ENCODE measurements at regions of chr1 and their contacts with region 1.

Region 1: GRCh38 chr1:239603530-239603929 is 217.2 kb downstream of the CHRM3 start:
- DNase-seq: peak; percentile 68
- ATAC-seq: peak; percentile 53
- H3K4me3 ChIP-seq: no peak overlapping the region
- H3K27ac ChIP-seq: peak overlapping the region; percentile 45
- H3K4me1 ChIP-seq: peaks cover 51% of the 10 kb centered on the region
- H3K27me3 ChIP-seq: no peaks in the 10 kb centered on the region
- CTCF ChIP-seq: no peak

Region 2: GRCh38 chr1:239040523-239040922 is 563.0 kb before region 1 on chr1:
- CTCF ChIA-PET with region 1: no interaction called
- POLR2A ChIA-PET with region 1: no interaction called
- intact Hi-C with region 1: loop called (anchors 5 kb)
- DNase-seq: no peak
- ATAC-seq: peak; percentile 50
- H3K4me3 ChIP-seq: no peak overlapping the region
- H3K27ac ChIP-seq: no peak overlapping the region
- H3K4me1 ChIP-seq: no peaks in the 10 kb centered on the region
- H3K27me3 ChIP-seq: no peaks in the 10 kb centered on the region
- CTCF ChIP-seq: no peak

Region 3: DNA sequence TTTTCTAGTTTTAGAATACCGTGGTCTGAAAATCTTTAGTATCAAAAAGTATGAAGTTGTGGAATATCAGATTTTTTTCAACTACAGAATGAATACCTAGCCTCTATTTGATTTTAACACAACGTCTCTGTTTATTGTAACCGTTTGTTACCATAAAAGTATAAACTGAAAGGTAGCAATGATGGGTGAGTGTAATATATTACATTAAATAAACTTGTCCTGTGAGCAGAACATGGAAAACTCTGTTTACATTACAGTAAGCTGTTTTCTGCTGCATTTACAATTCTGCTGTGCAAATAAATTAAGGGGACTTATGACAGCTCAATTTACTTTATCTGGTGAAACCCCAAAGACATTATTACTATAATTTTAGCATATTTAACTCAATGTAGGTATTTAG is 154.6 kb before region 1 on chr1:
- CTCF ChIA-PET with region 1: no interaction called
- POLR2A ChIA-PET with region 1: no interaction called
- intact Hi-C with region 1: loop called (anchors 2 kb)
- DNase-seq: no peak
- ATAC-seq: peak; percentile 12; the same call in 1 of the 2 replicates
- H3K4me3 ChIP-seq: no peak overlapping the region
- H3K27ac ChIP-seq: no peak overlapping the region
- H3K4me1 ChIP-seq: peaks cover 28% of the 10 kb centered on the region
- H3K27me3 ChIP-seq: no peaks in the 10 kb centered on the region
- CTCF ChIP-seq: no peak

Region 4: DNA sequence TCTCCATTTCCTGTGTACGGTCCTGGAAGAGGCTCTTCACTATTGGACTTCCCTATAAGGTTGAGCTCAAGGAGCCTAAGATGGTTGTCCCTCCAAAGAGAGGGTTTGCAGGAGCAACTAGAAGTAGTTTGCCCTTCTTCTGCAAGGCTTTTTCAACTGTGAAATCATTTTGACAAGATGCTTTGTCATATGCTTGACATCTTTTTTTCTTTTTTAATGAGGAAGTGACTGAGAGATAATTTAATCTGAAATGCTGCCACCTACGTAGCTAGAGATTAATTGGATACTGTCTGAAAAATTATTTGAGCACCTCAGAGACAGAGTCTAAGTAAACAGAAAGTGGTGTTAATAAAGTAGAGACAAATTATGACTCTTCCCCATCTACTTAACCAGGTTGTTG is 120.1 kb before region 1 on chr1:
- CTCF ChIA-PET with region 1: no interaction called
- POLR2A ChIA-PET with region 1: no interaction called
- intact Hi-C with region 1: loop called (anchors 2 kb)
- DNase-seq: no peak
- ATAC-seq: no peak
- H3K4me3 ChIP-seq: no peak overlapping the region
- H3K27ac ChIP-seq: no peak overlapping the region
- H3K4me1 ChIP-seq: peaks cover 26% of the 10 kb centered on the region
- H3K27me3 ChIP-seq: no peaks in the 10 kb centered on the region
- CTCF ChIP-seq: no peak

Region 5: DNA sequence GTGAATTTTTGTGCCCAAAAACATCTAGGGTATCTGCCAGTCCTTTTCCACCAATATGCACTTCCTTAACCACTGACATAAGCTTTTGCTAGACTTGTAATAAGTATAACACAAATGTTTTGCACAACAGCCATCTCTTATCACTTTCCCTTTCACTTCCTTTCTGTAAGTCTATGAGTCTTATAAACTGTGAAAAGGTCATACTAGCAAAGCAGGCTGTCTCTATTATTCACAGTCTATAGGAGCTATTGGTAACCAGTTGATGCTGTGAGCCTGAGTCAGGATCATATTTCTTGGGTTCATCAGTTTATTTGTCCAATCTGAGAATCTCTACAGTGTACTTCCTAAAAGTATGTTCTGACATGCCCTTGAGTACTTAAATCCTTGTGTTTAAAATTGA is 44.5 kb before region 1 on chr1:
- CTCF ChIA-PET with region 1: no interaction called
- POLR2A ChIA-PET with region 1: no interaction called
- intact Hi-C with region 1: loop called (anchors 5 kb)
- DNase-seq: peak; percentile 69
- ATAC-seq: peak; percentile 72
- H3K4me3 ChIP-seq: peak overlapping the region; percentile 41
- H3K27ac ChIP-seq: peak overlapping the region; percentile 79
- H3K4me1 ChIP-seq: peaks cover 22% of the 10 kb centered on the region
- H3K27me3 ChIP-seq: no peaks in the 10 kb centered on the region
- CTCF ChIP-seq: no peak

Region 6: DNA sequence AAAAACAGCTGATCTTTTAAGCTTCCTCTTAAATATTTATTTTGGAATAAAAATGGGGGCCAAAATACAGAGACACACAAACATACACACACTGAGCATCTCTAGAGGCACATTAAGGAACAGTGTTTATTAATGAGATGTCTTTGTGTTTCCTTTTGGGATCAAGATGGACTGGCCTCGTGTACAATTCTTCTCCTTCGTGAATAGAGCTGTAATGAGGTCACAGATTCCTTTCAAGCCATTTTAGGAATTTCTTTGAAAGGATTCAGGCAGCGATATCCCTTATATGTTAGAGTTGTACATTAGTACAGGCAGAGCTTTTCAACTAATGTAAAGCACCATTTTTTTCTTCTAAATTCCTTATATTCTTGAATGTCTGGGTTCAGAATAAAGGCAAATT is 78.5 kb after region 1 on chr1:
- CTCF ChIA-PET with region 1: no interaction called
- POLR2A ChIA-PET with region 1: no interaction called
- intact Hi-C with region 1: loop called (anchors 1 kb)
- DNase-seq: no peak
- ATAC-seq: no peak
- H3K4me3 ChIP-seq: no peak overlapping the region
- H3K27ac ChIP-seq: peak overlapping the region; percentile 57
- H3K4me1 ChIP-seq: peaks cover 30% of the 10 kb centered on the region
- H3K27me3 ChIP-seq: no peaks in the 10 kb centered on the region
- CTCF ChIP-seq: no peak

Region 7: GRCh38 chr1:239841631-239842030 is 238.1 kb after region 1 on chr1:
- CTCF ChIA-PET with region 1: no interaction called
- POLR2A ChIA-PET with region 1: no interaction called
- intact Hi-C with region 1: no loop called
- DNase-seq: no peak
- ATAC-seq: no peak
- H3K4me3 ChIP-seq: no peak overlapping the region
- H3K27ac ChIP-seq: no peak overlapping the region
- H3K4me1 ChIP-seq: no peaks in the 10 kb centered on the region
- H3K27me3 ChIP-seq: no peaks in the 10 kb centered on the region
- CTCF ChIP-seq: no peak

Measured in PC-3 (cell line).